ENCODE measurements at regions of chr4 and their contacts with region 1.

Region 1: DNA sequence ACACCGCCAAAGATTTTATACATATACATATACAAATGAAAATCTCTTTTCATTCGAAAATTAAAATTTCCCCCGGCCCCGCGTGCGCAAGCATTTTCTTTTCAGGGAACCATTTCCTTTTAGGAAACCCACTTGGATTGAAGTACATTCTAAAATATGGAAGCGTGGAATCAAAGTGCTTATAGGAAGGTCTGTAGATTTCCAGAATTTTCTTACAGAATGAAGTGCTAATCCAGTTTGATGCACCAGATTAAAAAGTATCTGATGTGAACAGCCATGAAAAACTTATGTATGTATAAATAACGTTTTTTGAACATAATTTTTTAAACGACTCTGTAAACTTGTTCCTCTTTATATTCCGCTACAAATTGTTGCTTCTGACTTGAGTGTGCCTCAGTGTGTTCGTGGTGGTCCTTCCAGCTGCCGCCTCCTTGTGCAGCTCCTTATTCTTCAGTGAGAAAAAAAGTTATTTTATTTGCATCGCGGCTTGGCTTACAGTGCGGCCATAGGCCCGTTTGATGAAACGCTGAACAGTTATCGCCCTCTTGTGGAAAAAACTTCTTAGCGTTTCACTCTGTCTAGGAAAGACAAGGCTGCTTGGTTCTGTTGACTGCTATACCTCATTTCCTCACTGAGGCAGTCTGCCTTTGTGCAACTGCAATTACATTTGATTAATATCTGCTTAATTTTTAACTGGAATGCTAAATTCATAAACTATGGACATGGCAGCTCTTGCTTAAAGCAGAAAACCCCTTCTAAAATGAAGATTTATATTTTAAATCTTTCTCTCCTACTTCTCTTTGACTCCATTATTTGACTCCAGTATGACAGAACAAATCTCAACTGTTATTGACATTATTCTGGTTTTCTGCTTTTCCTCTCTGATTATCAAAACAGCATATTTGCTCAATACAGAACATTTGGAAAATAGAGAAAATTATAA is 4.7 kb upstream of the NKX6-1 start:
- DNase-seq: peak; percentile 67
- H3K4me3 ChIP-seq: no peak overlapping the region
- H3K27ac ChIP-seq: no peak overlapping the region
- H3K4me1 ChIP-seq: peaks cover 3% of the 10 kb centered on the region
- H3K27me3 ChIP-seq: peaks cover 48 to 77% of the 10 kb centered on the region in 2 experiments
- CTCF ChIP-seq: peak; percentile 61 to 76
- POLR2A ChIP-seq: no peak

Region 2: DNA sequence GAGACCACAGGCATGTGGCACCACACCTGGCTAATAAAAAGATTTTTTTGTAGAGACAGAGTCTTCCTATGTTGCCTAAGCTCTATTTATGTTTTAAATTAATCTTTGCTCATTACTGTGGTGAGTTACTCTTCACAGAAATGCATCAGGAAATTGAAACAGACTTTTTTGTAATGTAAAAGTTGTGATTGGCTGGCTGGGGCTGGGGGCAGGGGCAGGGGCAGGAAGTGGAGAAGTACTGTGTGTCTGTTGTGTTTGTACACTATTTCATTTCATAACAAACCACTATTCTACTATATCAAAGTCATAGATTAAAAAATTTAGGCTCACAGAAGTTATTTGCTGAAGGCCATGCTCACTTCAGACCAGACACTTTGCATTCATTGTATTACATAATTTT is 999.8 kb before region 1 on chr4:
- CTCF ChIA-PET with region 1: no interaction called
- POLR2A ChIA-PET with region 1: no interaction called
- dilution Hi-C with region 1: no loop called
- intact Hi-C with region 1: loop called (anchors 10 kb)
- DNase-seq: no peak
- H3K4me3 ChIP-seq: no peak overlapping the region
- H3K27ac ChIP-seq: no peak overlapping the region
- H3K4me1 ChIP-seq: no peaks in the 10 kb centered on the region
- H3K27me3 ChIP-seq: peaks cover 0 to 2% of the 10 kb centered on the region in 2 experiments
- CTCF ChIP-seq: no peak
- POLR2A ChIP-seq: no peak

Region 3: GRCh38 chr4:83771113-83771705 is 732.6 kb before region 1 on chr4:
- CTCF ChIA-PET with region 1: interaction called, 14 read pairs
- POLR2A ChIA-PET with region 1: no interaction called
- dilution Hi-C with region 1: no loop called
- intact Hi-C with region 1: loop called (anchors 1 kb)
- DNase-seq: peak; percentile 24
- H3K4me3 ChIP-seq: no peak overlapping the region
- H3K27ac ChIP-seq: no peak overlapping the region
- H3K4me1 ChIP-seq: no peaks in the 10 kb centered on the region
- H3K27me3 ChIP-seq: no peaks in the 10 kb centered on the region
- CTCF ChIP-seq: peak; percentile 28 to 53
- POLR2A ChIP-seq: no peak

Region 4: DNA sequence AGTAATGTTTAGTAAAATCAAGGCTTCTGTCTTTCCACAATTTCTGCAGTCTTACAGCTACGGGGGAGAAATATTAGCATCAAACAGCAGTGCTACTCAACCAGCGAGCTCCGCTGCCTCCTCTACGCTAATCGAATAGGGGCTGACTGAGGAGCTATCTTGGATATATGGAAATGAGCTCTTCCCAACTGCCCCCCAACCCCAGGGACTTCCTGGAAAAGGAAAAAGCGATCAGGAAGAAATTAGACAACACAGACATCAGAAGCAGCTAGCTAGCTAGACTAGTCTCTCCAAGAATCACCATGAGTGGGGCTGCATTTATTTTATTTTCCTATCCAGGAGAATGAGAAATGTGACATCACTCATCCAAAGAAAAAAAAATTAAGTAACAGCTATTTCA is 12.3 kb before region 1 on chr4:
- CTCF ChIA-PET with region 1: interaction called, 16 read pairs
- POLR2A ChIA-PET with region 1: no interaction called
- dilution Hi-C with region 1: no loop called
- intact Hi-C with region 1: no loop called
- DNase-seq: no peak
- H3K4me3 ChIP-seq: no peak overlapping the region
- H3K27ac ChIP-seq: no peak overlapping the region
- H3K4me1 ChIP-seq: no peaks in the 10 kb centered on the region
- H3K27me3 ChIP-seq: peaks cover 61 to 99% of the 10 kb centered on the region in 2 experiments
- CTCF ChIP-seq: no peak
- POLR2A ChIP-seq: no peak

Region 5: GRCh38 chr4:84582302-84583000 is 78.7 kb after region 1 on chr4:
- CTCF ChIA-PET with region 1: no interaction called
- POLR2A ChIA-PET with region 1: no interaction called
- dilution Hi-C with region 1: no loop called
- intact Hi-C with region 1: loop called (anchors 5 kb)
- DNase-seq: peak; percentile 50
- H3K4me3 ChIP-seq: peak overlapping the region; percentile 32 to 52 (median 36)
- H3K27ac ChIP-seq: no peak overlapping the region
- H3K4me1 ChIP-seq: peaks cover 13% of the 10 kb centered on the region
- H3K27me3 ChIP-seq: peaks cover 50 to 67% of the 10 kb centered on the region in 2 experiments
- CTCF ChIP-seq: no peak
- POLR2A ChIP-seq: no peak